ENCODE measurements at regions of chr12 and their contacts with region 1.

Region 1: DNA sequence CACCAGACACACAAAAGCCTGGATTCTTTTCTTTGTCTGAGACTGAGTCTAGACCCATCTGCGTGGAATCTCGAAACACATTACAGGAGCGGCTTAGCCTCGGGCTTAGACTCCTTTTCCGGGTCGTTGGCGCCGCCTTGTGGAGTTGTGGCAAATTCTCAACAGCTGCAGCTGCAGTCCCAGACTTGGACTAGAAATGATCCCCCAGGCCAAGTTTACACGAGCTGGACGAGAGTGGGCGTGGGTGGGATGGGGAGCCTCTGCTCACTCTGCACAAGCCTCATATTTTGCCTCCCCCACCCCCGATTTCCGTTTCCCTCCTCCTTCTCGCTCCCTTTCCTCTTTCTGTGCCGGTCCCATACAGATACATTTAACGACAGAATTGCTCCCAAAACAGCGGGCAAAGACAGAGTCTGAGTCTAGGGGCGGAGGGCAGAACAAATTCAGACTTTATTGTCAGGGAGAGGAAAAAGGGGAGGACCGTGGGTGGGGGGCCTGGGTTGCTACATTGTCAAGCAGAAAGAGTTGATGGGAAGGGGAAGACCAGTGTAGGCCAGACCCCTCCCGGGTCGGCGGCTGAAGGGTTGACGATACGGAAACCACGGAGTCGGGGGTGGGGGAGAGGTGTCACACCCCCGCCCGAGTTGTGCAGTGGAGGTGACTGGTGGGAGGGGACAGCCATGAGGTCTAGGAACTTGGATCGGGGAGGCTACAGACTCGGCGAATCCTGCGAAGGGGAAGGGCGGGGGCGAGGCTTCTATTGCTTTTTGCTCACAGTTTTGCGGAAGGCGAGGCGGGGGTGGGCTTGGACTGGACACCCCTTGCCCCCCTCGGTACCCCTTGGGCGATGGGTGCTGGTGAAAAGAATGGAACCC is 4.7 kb upstream of the GPR84 start:
- DNase-seq: peak; percentile 86
- CTCF ChIP-seq: peak; percentile 85

Region 2: GRCh38 chr12:54040148-54040494 is 328.8 kb before region 1 on chr12:
- in situ Hi-C with region 1: no loop called
- DNase-seq: peak; percentile 58
- CTCF ChIP-seq: no peak

Region 3: DNA sequence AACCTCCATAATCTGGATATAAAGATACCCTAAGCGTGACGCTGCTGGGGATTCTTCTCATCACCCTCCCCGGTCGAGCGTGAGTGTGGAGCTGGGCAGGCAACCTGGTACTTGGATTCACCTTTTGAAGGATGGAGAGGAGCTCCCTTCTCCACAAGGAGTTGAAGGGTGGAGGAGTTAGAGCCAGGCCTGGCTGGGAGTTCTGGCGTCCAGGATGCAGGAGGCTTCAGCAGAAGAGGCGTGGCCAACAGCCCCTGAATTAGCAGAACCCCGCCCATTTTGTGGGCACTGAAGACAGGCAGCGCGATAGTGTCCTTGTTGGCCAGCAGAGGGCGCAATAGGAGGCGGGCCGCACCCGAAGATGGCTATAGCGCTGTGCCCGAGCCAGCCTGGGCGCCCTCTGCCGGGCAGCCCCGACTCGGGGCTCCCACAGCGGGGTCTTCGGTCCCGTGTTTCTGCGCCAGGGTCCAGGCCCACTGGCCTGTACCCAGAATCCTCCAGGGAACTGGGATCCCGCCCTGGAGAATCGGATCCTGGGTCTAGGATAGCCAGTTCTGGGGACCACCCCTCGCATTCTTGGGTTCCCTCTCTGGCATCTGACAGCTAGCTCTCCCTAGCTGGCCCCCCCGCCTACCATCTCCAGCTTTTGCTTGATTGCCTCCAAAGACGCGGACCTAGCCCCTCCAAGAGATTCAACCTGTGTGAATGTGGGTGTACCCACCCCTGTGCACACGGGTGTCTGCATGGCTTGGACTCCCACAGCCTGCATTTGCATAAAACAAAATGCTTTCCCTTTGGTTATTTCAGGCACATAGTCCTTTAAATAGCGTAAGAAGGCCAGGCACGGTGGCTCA is 154.2 kb before region 1 on chr12:
- in situ Hi-C with region 1: loop called (anchors 5 kb)
- DNase-seq: peak; percentile 93
- CTCF ChIP-seq: peak; percentile 99

Region 4: GRCh38 chr12:54294152-54294952 is 74.6 kb before region 1 on chr12:
- in situ Hi-C with region 1: loop called (anchors 10 kb)
- DNase-seq: peak; percentile 83
- CTCF ChIP-seq: peak; percentile 89

Region 5: GRCh38 chr12:54859502-54859901 is 490.6 kb after region 1 on chr12:
- in situ Hi-C with region 1: no loop called
- DNase-seq: no peak
- CTCF ChIP-seq: no peak